Dorsolateral prefrontal cortex (tissue), 120 donors: ENCODE measurements at regions of chr9 and their contacts with region 1.

Region 1: DNA sequence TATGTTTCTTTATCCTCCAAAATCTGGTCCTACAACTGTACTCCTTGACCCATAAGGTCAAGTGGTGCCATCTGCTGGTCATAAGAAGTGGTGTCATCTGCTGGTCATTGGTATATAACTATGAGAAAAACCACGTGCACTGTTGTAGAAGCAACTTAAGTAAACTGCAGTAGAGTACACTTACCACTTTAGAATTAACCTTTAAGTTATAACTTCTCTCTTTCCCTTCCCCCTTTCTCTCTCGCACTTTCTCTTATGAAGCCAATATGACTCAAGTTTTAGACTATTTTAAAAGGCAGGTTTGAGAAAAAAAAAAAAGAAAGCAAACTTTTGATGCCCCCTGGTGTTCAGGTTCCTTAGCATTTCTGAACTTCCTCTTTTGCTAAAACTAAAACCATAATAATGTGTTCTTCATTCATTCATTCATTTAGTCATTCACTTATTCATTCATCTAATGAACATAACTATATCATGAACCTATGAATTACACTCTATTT is 12.8 kb upstream of the MTAP start:
- DNase-seq: peak in 6 of 10 donors; percentile 26 to 78 (median 48)
- H3K4me3 ChIP-seq: peak overlapping the region in 12 of 59 donors; percentile 5 to 37 (median 30)
- H3K27ac ChIP-seq: no peak overlapping the region
- H3K27me3 ChIP-seq: peaks cover 0 to 12% (median 0%) of the 10 kb centered on the region in 45 donors
- CTCF ChIP-seq: peak; percentile 76 to 99 (median 93)

Region 2: DNA sequence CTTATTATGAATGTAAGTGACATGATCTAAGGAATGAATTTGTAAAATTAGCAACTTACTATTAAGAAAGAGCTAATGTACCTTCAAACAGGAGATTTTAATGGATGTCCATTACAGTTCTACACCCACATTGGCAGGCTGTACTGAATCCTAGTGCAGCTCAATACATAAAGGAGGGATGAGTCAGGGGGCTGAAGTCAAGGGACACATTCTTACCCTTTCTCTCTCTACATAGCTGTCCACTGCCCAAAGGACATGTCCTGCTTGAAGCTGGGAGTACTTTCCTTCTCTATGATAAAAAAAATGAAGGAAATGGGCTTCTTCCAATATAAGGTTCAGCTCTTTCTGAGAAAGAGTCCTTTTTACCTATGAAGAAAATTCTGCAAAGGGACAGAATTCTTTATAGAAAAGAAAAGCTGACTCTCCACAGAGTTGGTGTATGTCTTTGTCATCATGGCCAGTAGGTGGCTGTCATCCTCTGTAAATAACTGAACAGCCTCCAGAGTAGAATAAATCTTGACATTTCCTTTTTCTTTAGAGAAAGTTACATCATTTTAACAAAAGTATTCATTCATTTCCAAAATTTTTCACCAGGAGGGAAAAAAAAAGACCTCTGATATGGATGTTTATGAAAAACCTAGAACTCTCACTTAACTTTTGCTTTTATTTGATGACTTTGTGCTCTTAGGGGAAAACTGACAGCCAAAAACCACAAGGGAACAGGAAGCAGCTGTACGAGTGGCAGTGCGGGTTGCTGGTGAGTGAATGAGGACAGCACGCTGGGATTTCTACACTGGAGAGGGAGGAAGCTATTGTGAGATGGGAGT is 536.7 kb before region 1 on chr9:
- intact Hi-C with region 1: loop called in 1 of 2 experiments (anchors 10 kb)
- DNase-seq: peak in 3 of 10 donors; percentile 28 to 44 (median 31)
- H3K4me3 ChIP-seq: peak overlapping the region in 17 of 59 donors; percentile 5 to 50 (median 26)
- H3K27ac ChIP-seq: peak overlapping the region in 1 of 59 donors; percentile 4
- H3K27me3 ChIP-seq: peaks cover 0 to 6% (median 0%) of the 10 kb centered on the region in 45 donors
- CTCF ChIP-seq: peak; percentile 50 to 83 (median 73)

Region 3: GRCh38 chr9:21317956-21318923 is 471.3 kb before region 1 on chr9:
- intact Hi-C with region 1: loop called (anchors 5 kb)
- DNase-seq: peak in 5 of 10 donors; percentile 40 to 68 (median 48)
- H3K4me3 ChIP-seq: no peak overlapping the region
- H3K27ac ChIP-seq: no peak overlapping the region
- H3K27me3 ChIP-seq: no peaks in the 10 kb centered on the region
- CTCF ChIP-seq: peak; percentile 29 to 90 (median 75)

Region 4: DNA sequence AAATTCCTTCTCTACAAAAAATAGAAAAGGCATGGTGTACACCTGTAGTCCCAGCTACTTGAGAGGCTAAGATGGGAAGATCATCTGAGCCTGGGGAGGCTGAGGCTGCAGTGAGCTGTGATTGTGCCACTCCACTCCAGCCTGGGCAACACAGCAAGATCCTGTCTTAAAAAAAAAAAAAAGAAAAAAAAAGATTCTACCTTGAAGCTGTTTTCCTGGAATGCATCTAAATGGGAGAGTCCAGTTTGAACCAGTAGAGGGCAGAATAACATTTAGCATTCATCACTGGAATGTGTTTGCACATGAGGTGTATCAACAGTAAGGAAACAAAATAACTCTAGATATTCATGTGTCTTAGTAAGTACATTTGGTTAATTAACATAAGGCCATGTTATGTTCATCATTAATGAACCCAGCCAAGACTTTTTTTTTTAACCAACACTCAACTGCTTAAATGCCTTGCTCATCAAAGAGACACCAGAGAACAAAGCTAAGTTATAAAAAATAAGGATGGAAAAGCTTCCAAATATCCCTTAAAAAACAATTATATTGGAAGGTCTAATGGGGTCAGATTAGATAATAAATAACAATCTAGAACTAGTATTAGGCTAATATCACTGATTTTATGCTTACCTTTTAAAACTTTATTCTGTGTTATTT is 323.6 kb before region 1 on chr9:
- intact Hi-C with region 1: loop called (anchors 5 to 10 kb)
- DNase-seq: no peak
- H3K4me3 ChIP-seq: no peak overlapping the region
- H3K27ac ChIP-seq: no peak overlapping the region
- H3K27me3 ChIP-seq: no peaks in the 10 kb centered on the region
- CTCF ChIP-seq: peak; percentile 53 to 79 (median 70)

Region 5: DNA sequence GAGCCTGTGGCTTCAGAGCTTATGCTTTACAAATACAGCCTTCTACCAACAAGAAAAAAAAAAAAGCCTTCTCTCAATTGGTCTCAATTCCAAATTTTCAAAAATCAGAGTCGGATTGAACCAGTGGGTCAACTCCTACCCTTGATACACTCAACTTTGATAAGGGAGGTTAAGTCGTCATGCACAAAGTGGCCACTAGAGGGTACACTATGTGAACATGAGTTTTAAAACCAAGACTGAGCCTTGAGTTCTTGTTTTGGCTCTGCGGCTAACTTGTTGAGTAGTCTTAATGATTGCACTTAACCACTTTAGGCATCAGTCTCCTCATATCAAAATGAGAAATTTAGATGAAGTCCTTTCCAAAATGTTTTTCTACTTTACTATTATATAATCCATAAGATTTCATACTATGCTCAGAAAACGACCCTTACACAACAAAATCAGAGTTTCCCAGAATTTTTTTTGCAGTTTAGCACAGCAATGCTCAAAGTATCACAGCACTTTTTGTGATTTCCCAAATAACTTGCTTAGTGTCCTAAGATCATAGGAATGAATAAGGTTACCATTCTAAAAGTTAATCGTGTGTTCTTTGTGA is 80.0 kb before region 1 on chr9:
- intact Hi-C with region 1: loop called in 1 of 2 experiments (anchors 10 kb)
- DNase-seq: peak in 2 of 10 donors; percentile 48 to 55
- H3K4me3 ChIP-seq: no peak overlapping the region
- H3K27ac ChIP-seq: no peak overlapping the region
- H3K27me3 ChIP-seq: peaks cover 0 to 10% (median 0%) of the 10 kb centered on the region in 45 donors
- CTCF ChIP-seq: peak; percentile 57 to 86 (median 76)

Region 6: DNA sequence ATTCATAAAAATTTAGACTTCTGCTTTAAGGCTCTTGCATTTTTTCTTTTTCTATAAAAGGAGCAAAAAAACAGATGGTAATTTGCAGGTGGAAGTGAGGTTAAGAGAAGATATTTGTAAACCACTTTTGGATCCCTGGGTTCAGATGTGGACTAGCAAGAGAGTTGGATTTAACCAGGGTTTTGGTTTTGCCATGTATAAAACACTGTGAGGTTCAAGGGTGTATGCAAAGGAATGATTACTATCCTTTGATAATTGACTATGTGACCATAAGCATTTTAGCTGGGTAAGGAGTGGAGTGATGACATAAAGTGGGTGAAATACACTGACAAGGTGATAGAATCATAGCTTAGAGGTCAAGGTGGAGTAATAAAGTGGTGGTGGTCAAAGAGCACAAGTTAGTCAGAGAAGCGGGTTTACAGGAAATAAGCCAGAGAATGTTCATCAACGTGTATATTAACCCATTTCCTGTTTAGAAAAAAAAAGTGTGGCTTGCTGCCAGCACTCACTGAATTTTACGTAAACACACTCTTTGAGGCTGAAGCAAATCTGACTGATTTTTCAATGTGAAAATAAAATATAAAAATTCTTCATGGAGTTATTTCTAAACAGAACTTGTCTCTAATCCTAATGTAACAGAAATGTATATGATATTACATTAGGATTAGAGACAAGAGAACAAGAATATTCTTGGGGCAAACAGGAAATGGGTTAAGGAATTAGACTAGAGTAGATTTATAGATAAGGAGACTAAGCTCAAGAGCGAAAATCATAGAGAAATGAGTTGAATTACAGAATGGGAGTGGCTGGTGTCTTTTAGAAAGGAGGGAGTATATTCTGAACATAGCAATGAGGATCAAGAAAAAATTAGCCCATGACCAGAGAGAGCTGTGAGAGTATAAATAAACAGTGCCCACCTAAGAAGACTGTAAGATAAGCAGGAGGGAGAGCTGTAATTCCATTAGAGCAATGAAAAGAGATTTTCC is 130.1 kb after region 1 on chr9:
- intact Hi-C with region 1: no loop called
- DNase-seq: no peak
- H3K4me3 ChIP-seq: no peak overlapping the region
- H3K27ac ChIP-seq: no peak overlapping the region
- H3K27me3 ChIP-seq: no peaks in the 10 kb centered on the region
- CTCF ChIP-seq: no peak